Naive thymus-derived CD4-positive, alpha-beta T cell (primary cell): ENCODE measurements at regions of chr18 and their contacts with region 1.

Region 1: DNA sequence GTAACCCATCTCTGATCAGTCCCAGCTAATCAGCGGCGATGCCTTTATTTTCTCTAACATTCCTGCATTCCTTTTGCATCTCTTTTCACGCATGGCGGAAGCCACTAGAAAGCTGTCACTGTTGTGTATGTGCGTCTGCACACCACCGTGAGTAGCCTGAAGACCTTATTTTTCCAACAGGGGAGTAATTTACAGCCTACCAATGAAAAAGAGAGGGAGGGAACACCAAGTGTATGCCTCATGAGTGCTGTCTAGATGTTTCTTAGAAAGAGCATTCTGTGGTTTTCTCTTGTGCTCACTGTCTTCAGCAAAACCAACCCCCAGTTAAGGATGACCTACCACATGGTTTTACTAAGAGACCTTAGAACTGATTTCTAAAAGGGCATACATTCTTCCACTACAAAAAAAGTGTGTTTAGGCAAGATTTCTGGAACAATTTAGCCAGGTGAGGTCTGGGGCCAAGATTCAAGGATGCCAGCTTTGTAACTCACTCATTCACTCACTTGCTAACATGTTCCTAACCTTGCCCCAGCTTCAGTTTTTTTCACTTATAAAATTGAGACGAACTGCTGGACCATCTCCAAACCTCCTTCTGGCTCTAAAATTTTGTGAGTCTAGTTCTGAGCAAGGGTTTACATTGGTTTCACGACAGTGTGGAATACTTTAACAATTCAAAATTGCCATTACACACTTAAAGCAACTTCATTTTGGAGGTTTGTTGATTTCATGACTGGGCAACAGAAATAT is 51.4 kb downstream of the BCL2 start:
- DNase-seq: peak in 1 of 9 donors; percentile 20
- ATAC-seq: peak; percentile 59
- H3K4me3 ChIP-seq: peak overlapping the region; percentile 20
- H3K4me3 Mint-ChIP-seq: peak overlapping the region; percentile 35 to 75 (median 65)
- H3K27ac ChIP-seq: peak overlapping the region; percentile 27
- H3K27ac Mint-ChIP-seq: peak overlapping the region; percentile 1 to 87 (median 48)
- H3K4me1 ChIP-seq: peaks cover 16 to 36% of the 10 kb centered on the region in 2 donors
- H3K4me1 Mint-ChIP-seq: peaks cover 57 to 94% (median 80%) of the 10 kb centered on the region in 7 donors
- H3K27me3 ChIP-seq: no peaks in the 10 kb centered on the region
- H3K27me3 Mint-ChIP-seq: no peaks in the 10 kb centered on the region

Region 2: DNA sequence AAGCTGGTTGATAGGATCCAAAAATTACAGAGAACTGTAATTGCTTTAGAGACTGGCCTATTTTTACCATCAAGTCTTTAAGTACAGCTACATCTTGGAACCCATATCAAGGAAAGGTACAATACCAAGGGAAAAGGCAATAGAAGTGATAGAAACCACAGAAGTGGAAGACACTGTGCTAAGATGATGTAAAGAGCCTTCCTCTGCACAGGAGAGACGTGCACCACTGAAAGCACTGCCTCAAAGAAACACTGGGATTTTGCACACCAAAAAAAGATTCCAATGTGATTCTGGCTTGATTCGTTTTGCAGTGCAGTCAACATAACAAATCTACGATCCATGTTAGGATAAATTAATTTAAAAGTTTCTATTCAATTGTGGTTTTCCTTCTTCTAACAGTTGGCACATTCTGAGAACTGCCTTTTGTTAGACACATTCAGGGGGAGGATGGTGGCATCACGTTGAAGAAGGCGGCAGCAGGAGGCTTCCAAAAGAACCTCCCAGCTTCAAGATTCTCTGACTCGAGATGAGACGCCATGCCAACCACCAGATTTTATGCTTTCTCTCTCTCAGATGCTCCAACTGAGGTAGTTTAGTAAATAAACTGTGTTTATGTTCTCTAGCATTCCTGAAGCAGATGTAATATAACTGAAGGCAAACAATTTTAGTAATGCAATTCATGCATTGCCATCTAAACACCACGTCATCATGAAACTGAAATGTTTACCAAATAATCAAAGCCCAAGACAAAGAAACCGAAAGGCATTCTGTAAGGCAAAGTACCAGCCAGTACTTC is 51.4 kb before region 1 on chr18:
- CTCF ChIA-PET with region 1: no interaction called
- POLR2A ChIA-PET with region 1: interaction called, 3 read pairs
- intact Hi-C with region 1: loop called in 1 of 2 experiments (anchors 2 kb)
- DNase-seq: peak in 7 of 9 donors; percentile 34 to 62 (median 49)
- ATAC-seq: peak; percentile 73
- H3K4me3 ChIP-seq: peak overlapping the region; percentile 25
- H3K4me3 Mint-ChIP-seq: peak overlapping the region; percentile 54 to 89 (median 78)
- H3K27ac ChIP-seq: peak overlapping the region; percentile 63
- H3K27ac Mint-ChIP-seq: peak overlapping the region; percentile 70 to 94 (median 90)
- H3K4me1 ChIP-seq: peaks cover 58 to 75% of the 10 kb centered on the region in 2 donors
- H3K4me1 Mint-ChIP-seq: peaks cover 71 to 99% (median 93%) of the 10 kb centered on the region in 7 donors
- H3K27me3 ChIP-seq: no peaks in the 10 kb centered on the region
- H3K27me3 Mint-ChIP-seq: no peaks in the 10 kb centered on the region

Region 3: GRCh38 chr18:63253428-63254372 is 14.4 kb before region 1 on chr18:
- CTCF ChIA-PET with region 1: interaction called, 3 read pairs
- POLR2A ChIA-PET with region 1: interaction called, 7 read pairs
- intact Hi-C with region 1: loop called (anchors 1 to 2 kb)
- DNase-seq: no peak
- ATAC-seq: peak; percentile 74
- H3K4me3 ChIP-seq: no peak overlapping the region
- H3K4me3 Mint-ChIP-seq: peak overlapping the region in 8 of 10 donors; percentile 1 to 64 (median 32)
- H3K27ac ChIP-seq: no peak overlapping the region
- H3K27ac Mint-ChIP-seq: peak overlapping the region in 8 of 9 donors; percentile 9 to 79 (median 53)
- H3K4me1 ChIP-seq: peaks cover 7 to 25% of the 10 kb centered on the region in 2 donors
- H3K4me1 Mint-ChIP-seq: peaks cover 42 to 81% (median 73%) of the 10 kb centered on the region in 7 donors
- H3K27me3 ChIP-seq: no peaks in the 10 kb centered on the region
- H3K27me3 Mint-ChIP-seq: no peaks in the 10 kb centered on the region

Region 4: DNA sequence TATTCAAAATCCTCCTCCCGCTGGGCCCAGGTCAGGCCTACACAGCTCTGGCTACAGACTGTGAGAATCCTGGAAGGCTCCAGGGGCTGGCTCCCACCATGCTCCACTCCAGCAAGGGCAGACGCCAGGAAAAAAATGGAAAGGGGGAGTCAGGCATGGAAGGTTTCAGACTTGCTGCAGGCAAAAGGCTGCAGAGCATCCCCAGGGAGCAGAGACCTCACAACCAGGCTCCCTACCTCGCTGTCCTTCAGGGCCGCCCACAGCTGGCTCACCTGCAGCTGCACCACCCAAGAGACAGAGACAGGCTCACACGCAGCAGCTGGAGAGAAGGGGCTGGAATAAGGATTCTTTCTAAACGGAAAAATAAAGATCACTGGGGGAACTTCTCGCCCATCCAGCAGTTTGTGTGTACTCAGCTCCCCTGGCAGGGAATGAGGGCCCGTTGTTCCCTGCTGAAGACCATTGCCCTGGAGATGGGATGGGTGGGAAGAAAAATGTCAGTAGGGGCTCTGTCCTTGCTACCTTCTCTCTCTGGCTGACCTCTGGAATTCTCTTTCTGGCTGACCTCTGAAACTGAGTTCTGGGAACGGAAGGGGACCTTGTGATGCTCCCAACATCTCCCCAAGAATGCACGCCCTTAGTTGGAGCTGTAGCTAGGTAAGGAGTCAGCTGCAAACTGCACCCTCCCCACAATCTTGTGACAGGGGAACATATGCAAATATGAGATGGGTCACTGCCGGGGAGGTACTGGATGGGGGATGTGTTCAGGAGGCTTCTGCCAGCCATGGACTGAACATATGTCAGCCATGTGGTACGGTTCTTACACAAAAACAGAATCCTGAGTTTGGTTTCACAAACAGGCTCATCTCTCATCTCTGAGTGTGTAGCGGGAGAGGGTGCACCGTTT is 16.9 kb after region 1 on chr18:
- CTCF ChIA-PET with region 1: interaction called, 4 read pairs
- POLR2A ChIA-PET with region 1: interaction called, 9 read pairs
- intact Hi-C with region 1: loop called in 1 of 2 experiments (anchors 2 kb)
- DNase-seq: no peak
- ATAC-seq: peak; percentile 31
- H3K4me3 ChIP-seq: no peak overlapping the region
- H3K4me3 Mint-ChIP-seq: peak overlapping the region in 6 of 10 donors; percentile 13 to 48 (median 32)
- H3K27ac ChIP-seq: no peak overlapping the region
- H3K27ac Mint-ChIP-seq: peak overlapping the region in 4 of 9 donors; percentile 8 to 68 (median 38)
- H3K4me1 ChIP-seq: peaks cover 37 to 56% of the 10 kb centered on the region in 2 donors
- H3K4me1 Mint-ChIP-seq: peaks cover 22 to 45% (median 30%) of the 10 kb centered on the region in 7 donors
- H3K27me3 ChIP-seq: no peaks in the 10 kb centered on the region
- H3K27me3 Mint-ChIP-seq: no peaks in the 10 kb centered on the region

Region 5: GRCh38 chr18:63292831-63293683 is 24.9 kb after region 1 on chr18:
- CTCF ChIA-PET with region 1: interaction called, 4 read pairs
- POLR2A ChIA-PET with region 1: interaction called, 7 read pairs
- intact Hi-C with region 1: loop called (anchors 1 to 2 kb)
- DNase-seq: no peak
- ATAC-seq: peak; percentile 54
- H3K4me3 ChIP-seq: no peak overlapping the region
- H3K4me3 Mint-ChIP-seq: peak overlapping the region in 7 of 10 donors; percentile 7 to 69 (median 50)
- H3K27ac ChIP-seq: peak overlapping the region; percentile 34
- H3K27ac Mint-ChIP-seq: peak overlapping the region in 6 of 9 donors; percentile 1 to 71 (median 38)
- H3K4me1 ChIP-seq: peaks cover 51 to 55% of the 10 kb centered on the region in 2 donors
- H3K4me1 Mint-ChIP-seq: peaks cover 11 to 65% (median 17%) of the 10 kb centered on the region in 7 donors
- H3K27me3 ChIP-seq: no peaks in the 10 kb centered on the region
- H3K27me3 Mint-ChIP-seq: no peaks in the 10 kb centered on the region